ENCODE measurements at regions of chr1 and their contacts with region 1.

Region 1: GRCh38 chr1:20633190-20634064 is at the start of gene PINK1:
- ATAC-seq: peak; percentile 75 to 91 (median 87)
- H3K4me3 ChIP-seq: peak within 1 kb of the TSS; percentile 66 to 94 (median 82)
- H3K27ac ChIP-seq: peak within 1 kb of the TSS; percentile 74 to 80
- H3K4me1 ChIP-seq: peaks cover 5 to 7% of the 10 kb centered on the region in 2 donors
- total RNA-seq, gene PINK1: 22.7 to 117 (median 51.4) TPM

Region 2: DNA sequence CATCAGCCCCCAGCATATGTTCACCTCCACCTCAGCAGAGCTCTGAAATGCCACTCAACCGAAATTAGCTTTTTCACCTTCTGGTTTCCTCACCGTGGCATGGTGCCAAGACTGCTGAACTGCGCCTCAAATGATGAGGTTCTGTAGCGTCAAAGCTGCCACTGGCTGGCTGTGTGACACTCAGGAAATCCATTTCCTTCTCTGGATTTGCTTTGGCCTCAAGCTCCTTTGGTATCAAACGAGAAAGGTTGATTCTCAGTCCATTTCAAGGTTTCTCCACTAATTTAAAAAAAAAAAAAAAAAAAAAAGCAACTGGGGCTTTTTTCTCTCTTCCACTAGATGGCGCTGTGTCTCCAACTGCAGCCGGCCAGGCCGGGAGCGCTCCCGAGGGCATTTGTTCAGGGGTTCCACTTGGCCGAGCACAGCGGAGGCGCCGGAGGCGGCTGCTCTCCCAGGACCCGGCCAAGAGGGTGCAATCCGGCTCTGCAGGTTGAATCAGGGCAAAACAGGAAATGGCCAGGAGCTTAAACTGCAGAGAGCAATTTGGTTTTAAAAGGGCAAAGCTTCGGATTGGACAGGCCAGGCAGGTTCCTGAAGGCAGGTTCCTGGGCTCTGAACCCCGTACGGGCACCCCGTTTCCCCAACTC is 420.6 kb before region 1 on chr1:
- in situ Hi-C with region 1: loop called in 1 of 9 experiments (anchors 25 kb)
- ATAC-seq: peak; percentile 76 to 100 (median 98)
- H3K4me3 ChIP-seq: no peak overlapping the region
- H3K27ac ChIP-seq: peak overlapping the region in 1 of 2 donors; percentile 25
- H3K4me1 ChIP-seq: peaks cover 9 to 10% of the 10 kb centered on the region in 2 donors

Region 3: GRCh38 chr1:20507564-20508410 is 125.6 kb before region 1 on chr1 and contains the start of gene MUL1:
- in situ Hi-C with region 1: loop called in 1 of 9 experiments (anchors 25 kb)
- ATAC-seq: peak; percentile 89 to 97 (median 93)
- H3K4me3 ChIP-seq: peak within 1 kb of the TSS; percentile 70 to 98 (median 89)
- H3K27ac ChIP-seq: peak within 1 kb of the TSS; percentile 65 to 89
- H3K4me1 ChIP-seq: peaks cover 25 to 38% of the 10 kb centered on the region in 2 donors
- total RNA-seq, gene MUL1: 21.0 to 36.3 (median 29.5) TPM

Region 4: DNA sequence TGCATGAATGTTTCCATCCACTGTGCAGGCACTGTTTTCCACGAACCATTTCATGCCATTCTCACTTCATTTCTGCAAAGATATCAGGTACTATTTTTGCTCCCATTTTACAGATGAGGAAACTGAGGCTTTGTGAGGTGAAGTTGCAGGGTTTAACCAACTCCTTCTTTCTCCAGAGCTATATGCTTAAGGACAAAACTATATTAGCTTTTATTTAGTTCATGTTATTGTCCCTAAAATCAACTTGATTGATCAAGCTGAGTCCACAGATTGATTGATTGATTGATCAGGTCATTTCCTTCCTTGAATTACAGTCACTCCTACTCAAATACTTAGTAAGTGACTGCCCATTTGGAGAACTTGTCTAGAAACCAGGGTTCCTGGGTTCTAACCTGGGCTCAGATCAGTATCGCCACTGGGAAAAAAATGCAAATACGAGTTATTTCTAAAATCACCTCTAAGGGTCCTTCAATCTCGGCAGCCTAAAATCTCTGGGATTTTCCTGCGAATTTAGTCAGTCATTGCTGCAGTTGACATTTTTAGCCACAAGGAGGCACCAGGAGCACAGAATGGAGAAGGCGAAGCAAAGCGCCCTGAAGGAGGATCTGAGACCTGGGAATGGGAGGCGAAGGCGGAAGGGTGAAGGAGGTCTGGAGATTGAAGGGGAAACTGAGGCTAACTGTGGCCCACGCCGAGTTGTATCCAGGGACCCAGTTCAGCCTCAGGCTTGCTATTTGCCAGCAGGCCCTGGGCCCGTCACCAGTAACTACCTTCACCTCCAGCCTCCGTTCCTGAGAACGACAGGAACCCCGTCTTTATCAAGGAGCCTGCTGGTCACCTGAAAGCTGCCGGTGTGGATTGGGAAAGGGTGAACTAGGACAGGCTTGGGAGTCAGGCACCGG is 111.2 kb before region 1 on chr1:
- in situ Hi-C with region 1: loop called in 4 of 9 experiments (anchors 10 to 25 kb)
- ATAC-seq: peak; percentile 45 to 80 (median 70)
- H3K4me3 ChIP-seq: no peak overlapping the region
- H3K27ac ChIP-seq: no peak overlapping the region
- H3K4me1 ChIP-seq: no peaks in the 10 kb centered on the region

Region 5: DNA sequence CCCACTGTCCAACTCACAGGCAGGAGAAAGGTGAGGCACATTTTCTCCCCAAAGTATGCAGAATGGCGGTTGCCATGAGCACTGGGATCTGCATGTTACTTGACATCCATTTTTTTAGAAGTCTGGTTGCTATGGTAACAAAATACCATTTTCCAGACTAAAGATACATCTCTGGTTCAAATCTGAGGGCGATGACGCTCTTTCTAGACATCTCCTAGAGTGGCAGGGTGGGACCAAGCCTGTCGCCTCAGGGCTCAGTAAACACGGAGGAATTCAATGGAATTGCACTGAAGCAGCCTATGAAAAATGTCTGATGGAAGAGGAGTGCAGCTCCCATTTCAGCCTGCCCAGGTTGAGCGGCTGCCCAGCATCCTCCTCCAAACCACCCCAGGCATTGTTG is 102.5 kb before region 1 on chr1:
- in situ Hi-C with region 1: loop called in 3 of 9 experiments (anchors 10 to 25 kb)
- ATAC-seq: peak in 6 of 8 experiments; percentile 36 to 95 (median 66)
- H3K4me3 ChIP-seq: no peak overlapping the region
- H3K27ac ChIP-seq: no peak overlapping the region
- H3K4me1 ChIP-seq: peaks cover 5 to 6% of the 10 kb centered on the region in 2 donors